Aorta (tissue), 5 donors: ENCODE measurements at regions of chr14 and their contacts with region 1.

Region 1: GRCh38 chr14:23057757-23058653 is 685 bp upstream of the CDH24 start:
- DNase-seq: peak; percentile 91 to 96
- ATAC-seq: peak; percentile 87
- H3K4me3 ChIP-seq: peak overlapping the region; percentile 28 to 49
- H3K27ac ChIP-seq: peak overlapping the region in 1 of 2 donors; percentile 0
- H3K4me1 ChIP-seq: peaks cover 0 to 3% of the 10 kb centered on the region in 2 donors
- H3K27me3 ChIP-seq: no peaks in the 10 kb centered on the region

Region 2: DNA sequence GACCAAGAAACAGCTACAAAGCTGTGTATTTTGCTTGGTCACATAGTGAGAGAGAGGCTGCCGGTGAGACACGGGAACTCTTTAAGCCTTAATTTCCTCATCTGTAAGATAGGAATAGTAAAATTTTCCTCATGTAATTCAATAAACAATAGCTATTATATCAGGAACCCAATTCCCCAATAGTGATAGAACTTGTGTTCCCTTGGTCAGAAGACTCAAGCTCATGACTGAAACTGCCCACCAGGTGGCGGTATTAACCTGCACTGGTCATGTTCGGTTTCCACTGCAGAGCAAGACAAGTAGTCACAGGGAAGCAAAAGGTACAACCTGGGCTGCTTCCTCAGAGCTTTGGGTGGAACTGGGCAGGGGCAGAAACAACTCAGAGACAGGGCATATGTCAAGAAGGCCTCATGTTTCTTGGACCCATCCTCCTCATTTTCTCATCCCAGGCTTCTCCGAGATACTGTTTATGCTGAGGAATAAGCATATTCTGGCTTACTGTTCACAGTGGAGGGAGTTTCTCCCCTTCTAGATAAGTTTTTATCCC is 71.4 kb before region 1 on chr14:
- intact Hi-C with region 1: loop called (anchors 1 to 2 kb)
- DNase-seq: peak; percentile 90 to 93
- ATAC-seq: peak; percentile 70
- H3K4me3 ChIP-seq: no peak overlapping the region
- H3K27ac ChIP-seq: no peak overlapping the region
- H3K4me1 ChIP-seq: no peaks in the 10 kb centered on the region
- H3K27me3 ChIP-seq: no peaks in the 10 kb centered on the region

Region 3: DNA sequence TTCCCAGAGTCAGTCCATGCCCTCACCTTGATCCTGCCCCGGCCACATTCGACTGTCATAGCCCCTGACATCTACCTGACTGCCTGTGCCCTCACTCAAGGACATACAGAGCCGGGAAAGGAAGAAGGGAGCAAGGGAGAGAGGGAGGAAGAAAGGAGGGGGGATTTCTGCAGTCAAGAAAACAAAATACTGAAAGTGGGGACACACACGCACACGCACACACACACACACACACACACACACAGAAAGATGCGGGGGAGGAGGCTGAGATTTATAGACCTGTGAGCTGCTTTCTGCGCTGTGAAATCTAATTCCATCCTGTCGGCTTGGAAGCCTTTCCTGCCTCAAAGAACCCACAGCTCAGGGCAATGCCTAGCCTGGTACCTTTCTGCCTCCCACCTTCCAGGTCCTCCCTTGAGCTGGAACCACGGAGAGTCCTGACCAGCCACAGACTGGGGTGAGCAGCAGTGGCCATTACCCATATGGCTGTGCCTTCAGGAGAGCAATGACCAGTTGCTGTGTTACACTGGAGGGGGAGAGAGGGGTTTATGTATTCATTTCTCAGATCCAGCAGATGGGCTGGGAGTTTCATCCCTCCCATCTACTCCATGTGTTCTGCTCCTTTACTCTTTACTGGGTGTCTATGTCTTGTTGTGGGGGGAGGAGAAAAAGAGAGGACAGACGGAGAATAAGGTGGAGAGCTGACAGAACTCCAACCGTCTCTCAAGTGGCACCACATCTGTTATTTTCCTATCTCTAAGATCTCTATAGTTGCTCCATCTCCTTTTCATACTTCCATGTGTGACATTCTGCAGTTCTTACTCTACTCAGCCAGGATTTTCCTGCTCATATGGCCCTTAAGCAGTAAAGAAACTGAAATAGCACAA is 61.0 kb before region 1 on chr14:
- intact Hi-C with region 1: no loop called
- DNase-seq: no peak
- ATAC-seq: no peak
- H3K4me3 ChIP-seq: no peak overlapping the region
- H3K27ac ChIP-seq: no peak overlapping the region
- H3K4me1 ChIP-seq: no peaks in the 10 kb centered on the region
- H3K27me3 ChIP-seq: no peaks in the 10 kb centered on the region